Thyroid gland (tissue), 4 donors: ENCODE measurements at regions of chr11 and their contacts with region 1.

Region 1: GRCh38 chr11:73661035-73661628 is 14.8 kb downstream of the PLEKHB1 start:
- DNase-seq: peak; percentile 84 to 89
- H3K4me3 ChIP-seq: peak overlapping the region in 1 of 3 donors; percentile 6
- H3K27ac ChIP-seq: no peak overlapping the region
- H3K4me1 ChIP-seq: peaks cover 0 to 9% of the 10 kb centered on the region in 2 donors
- H3K27me3 ChIP-seq: no peaks in the 10 kb centered on the region
- CTCF ChIP-seq: peak; percentile 86 to 99 (median 97)
- POLR2A ChIP-seq: no peak

Region 2: GRCh38 chr11:73399159-73399590 is 262.0 kb before region 1 on chr11:
- intact Hi-C with region 1: loop called (anchors 5 kb)
- DNase-seq: no peak
- H3K4me3 ChIP-seq: no peak overlapping the region
- H3K27ac ChIP-seq: no peak overlapping the region
- H3K4me1 ChIP-seq: no peaks in the 10 kb centered on the region
- H3K27me3 ChIP-seq: no peaks in the 10 kb centered on the region
- CTCF ChIP-seq: no peak
- POLR2A ChIP-seq: no peak

Region 3: DNA sequence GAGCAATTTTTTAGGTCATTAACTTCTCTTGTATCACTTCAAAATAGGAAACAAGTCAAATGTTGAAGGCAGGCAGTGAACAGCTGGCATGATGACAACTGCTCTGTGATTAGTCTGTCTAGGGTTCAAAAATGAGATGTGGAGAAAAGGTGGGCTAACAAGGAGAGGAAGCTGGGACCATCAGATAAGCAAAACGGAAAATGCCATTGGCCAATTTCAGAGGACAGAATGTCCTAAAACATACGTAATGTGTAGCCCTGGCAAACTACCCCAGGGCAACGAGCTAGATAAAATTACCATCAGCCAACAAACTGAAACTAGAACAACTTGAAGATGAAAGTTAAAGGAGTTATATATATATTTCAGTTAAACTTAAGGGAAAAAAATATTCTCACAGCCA is 191.7 kb before region 1 on chr11:
- intact Hi-C with region 1: no loop called
- DNase-seq: no peak
- H3K4me3 ChIP-seq: no peak overlapping the region
- H3K27ac ChIP-seq: peak overlapping the region in 1 of 3 donors; percentile 11
- H3K4me1 ChIP-seq: peaks cover 46 to 53% of the 10 kb centered on the region in 2 donors
- H3K27me3 ChIP-seq: no peaks in the 10 kb centered on the region
- CTCF ChIP-seq: no peak
- POLR2A ChIP-seq: no peak

Region 4: DNA sequence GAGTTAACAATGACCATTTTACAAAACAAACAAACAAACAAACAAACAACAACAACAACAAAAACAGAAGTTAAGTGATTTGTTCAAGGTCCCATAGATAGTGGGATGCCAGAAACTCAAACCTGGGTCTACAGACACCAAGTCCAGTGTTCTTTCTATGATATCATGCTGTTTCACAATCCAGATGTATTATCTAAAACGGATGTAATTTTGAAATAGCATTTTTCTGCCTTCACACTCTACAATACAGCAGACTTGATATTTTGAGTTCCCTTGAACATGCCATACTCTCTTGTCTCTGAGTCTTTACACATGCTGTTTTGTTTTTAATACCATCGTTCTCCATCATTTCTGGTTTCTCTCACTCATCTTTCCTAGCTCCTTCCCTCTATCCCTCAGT is 180.5 kb before region 1 on chr11:
- intact Hi-C with region 1: no loop called
- DNase-seq: no peak
- H3K4me3 ChIP-seq: no peak overlapping the region
- H3K27ac ChIP-seq: no peak overlapping the region
- H3K4me1 ChIP-seq: peaks cover 0 to 3% of the 10 kb centered on the region in 2 donors
- H3K27me3 ChIP-seq: no peaks in the 10 kb centered on the region
- CTCF ChIP-seq: no peak
- POLR2A ChIP-seq: no peak

Region 5: DNA sequence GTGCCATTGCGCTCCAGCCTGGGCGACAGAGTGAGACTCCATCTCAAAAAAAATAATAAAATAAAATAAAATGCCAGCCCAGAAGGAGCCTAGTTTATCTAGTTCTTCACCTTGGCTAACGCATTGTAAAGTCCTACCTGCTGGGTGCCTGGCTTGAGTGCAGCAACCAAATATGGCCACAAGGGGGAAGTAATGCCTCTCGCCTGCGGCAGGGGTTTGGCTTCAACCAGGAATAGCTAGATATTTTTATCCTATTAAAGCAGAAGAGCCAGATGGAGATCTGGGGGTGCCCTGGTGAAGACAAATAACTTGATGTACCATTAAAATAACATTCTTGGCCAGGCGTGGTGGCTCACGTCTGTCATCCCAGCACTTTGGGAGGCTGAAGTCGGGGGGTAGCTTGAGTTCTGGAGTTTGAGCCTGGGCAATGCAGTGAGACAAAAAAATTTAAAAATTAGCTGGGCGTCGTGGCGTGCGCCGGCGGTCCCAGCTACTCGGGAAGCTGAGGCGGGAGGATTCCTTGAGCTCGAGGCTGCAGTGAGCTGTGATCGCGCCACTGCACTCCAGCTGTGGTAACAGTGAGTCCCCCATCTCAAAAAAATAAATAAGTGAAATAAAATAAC is 35.3 kb before region 1 on chr11:
- intact Hi-C with region 1: loop called (anchors 2 kb)
- DNase-seq: peak; percentile 75 to 78
- H3K4me3 ChIP-seq: no peak overlapping the region
- H3K27ac ChIP-seq: no peak overlapping the region
- H3K4me1 ChIP-seq: no peaks in the 10 kb centered on the region
- H3K27me3 ChIP-seq: no peaks in the 10 kb centered on the region
- CTCF ChIP-seq: peak; percentile 74 to 94 (median 88)
- POLR2A ChIP-seq: no peak